ENCODE measurements at regions of chr13 and their contacts with region 1.

Region 1: GRCh38 chr13:33542283-33543088 is 256.9 kb upstream of the STARD13 start:
- DNase-seq: peak; percentile 97 to 100 (median 99)
- ATAC-seq: peak; percentile 79
- H3K4me3 ChIP-seq: peak overlapping the region; percentile 68 to 69
- H3K4me3 Mint-ChIP-seq: peak overlapping the region; percentile 91
- H3K27ac ChIP-seq: peak overlapping the region; percentile 95 to 96
- H3K27ac Mint-ChIP-seq: peak overlapping the region; percentile 99
- H3K4me1 ChIP-seq: peaks cover 28% of the 10 kb centered on the region
- H3K4me1 Mint-ChIP-seq: peaks cover 48% of the 10 kb centered on the region
- H3K27me3 ChIP-seq: no peaks in the 10 kb centered on the region
- H3K27me3 Mint-ChIP-seq: no peaks in the 10 kb centered on the region
- CTCF ChIP-seq: peak; percentile 77

Region 2: DNA sequence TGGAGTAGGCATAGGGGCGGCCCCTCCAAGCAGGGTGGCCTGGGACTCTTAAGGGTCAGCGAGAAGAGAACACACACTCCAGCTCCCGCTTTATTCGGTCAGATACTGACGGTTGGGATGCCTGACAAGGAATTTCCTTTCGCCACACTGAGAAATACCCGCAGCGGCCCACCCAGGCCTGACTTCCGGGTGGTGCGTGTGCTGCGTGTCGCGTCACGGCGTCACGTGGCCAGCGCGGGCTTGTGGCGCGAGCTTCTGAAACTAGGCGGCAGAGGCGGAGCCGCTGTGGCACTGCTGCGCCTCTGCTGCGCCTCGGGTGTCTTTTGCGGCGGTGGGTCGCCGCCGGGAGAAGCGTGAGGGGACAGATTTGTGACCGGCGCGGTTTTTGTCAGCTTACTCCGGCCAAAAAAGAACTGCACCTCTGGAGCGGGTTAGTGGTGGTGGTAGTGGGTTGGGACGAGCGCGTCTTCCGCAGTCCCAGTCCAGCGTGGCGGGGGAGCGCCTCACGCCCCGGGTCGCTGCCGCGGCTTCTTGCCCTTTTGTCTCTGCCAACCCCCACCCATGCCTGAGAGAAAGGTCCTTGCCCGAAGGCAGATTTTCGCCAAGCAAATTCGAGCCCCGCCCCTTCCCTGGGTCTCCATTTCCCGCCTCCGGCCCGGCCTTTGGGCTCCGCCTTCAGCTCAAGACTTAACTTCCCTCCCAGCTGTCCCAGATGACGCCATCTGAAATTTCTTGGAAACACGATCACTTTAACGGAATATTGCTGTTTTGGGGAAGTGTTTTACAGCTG is 1227.1 kb before region 1 on chr13 and contains the starts of genes BRCA2 and ZAR1L:
- CTCF ChIA-PET with region 1: no interaction called
- POLR2A ChIA-PET with region 1: interaction called, 4 read pairs
- intact Hi-C with region 1: loop called (anchors 1 to 2 kb)
- DNase-seq: peak; percentile 73 to 95 (median 88)
- ATAC-seq: peak; percentile 90
- H3K4me3 ChIP-seq: peak within 1 kb of the TSS; percentile 80 to 81
- H3K4me3 Mint-ChIP-seq: peak within 1 kb of the TSS; percentile 93
- H3K27ac ChIP-seq: peak within 1 kb of the TSS; percentile 99
- H3K27ac Mint-ChIP-seq: peak within 1 kb of the TSS; percentile 100
- H3K4me1 ChIP-seq: peaks cover 4% of the 10 kb centered on the region
- H3K4me1 Mint-ChIP-seq: peaks cover 14% of the 10 kb centered on the region
- H3K27me3 ChIP-seq: no peaks in the 10 kb centered on the region
- H3K27me3 Mint-ChIP-seq: no peaks in the 10 kb centered on the region
- CTCF ChIP-seq: no peak
- total RNA-seq, gene BRCA2: 2.6 to 3.6 TPM
- total RNA-seq, gene ZAR1L: not detected

Region 3: GRCh38 chr13:32443111-32443510 is 1099.4 kb before region 1 on chr13:
- CTCF ChIA-PET with region 1: no interaction called
- POLR2A ChIA-PET with region 1: no interaction called
- intact Hi-C with region 1: loop called in 1 of 2 experiments (anchors 5 kb)
- DNase-seq: peak in 6 of 9 experiments; percentile 14 to 77 (median 47)
- ATAC-seq: peak; percentile 75
- H3K4me3 ChIP-seq: no peak overlapping the region
- H3K4me3 Mint-ChIP-seq: no peak overlapping the region
- H3K27ac ChIP-seq: no peak overlapping the region
- H3K27ac Mint-ChIP-seq: no peak overlapping the region
- H3K4me1 ChIP-seq: no peaks in the 10 kb centered on the region
- H3K4me1 Mint-ChIP-seq: peaks cover 3% of the 10 kb centered on the region
- H3K27me3 ChIP-seq: no peaks in the 10 kb centered on the region
- H3K27me3 Mint-ChIP-seq: no peaks in the 10 kb centered on the region
- CTCF ChIP-seq: peak; percentile 65

Region 4: GRCh38 chr13:32639502-32640105 is 902.9 kb before region 1 on chr13:
- CTCF ChIA-PET with region 1: no interaction called
- POLR2A ChIA-PET with region 1: no interaction called
- intact Hi-C with region 1: loop called (anchors 5 kb)
- DNase-seq: peak; percentile 10 to 81 (median 56)
- ATAC-seq: peak; percentile 92
- H3K4me3 ChIP-seq: no peak overlapping the region
- H3K4me3 Mint-ChIP-seq: no peak overlapping the region
- H3K27ac ChIP-seq: no peak overlapping the region
- H3K27ac Mint-ChIP-seq: no peak overlapping the region
- H3K4me1 ChIP-seq: no peaks in the 10 kb centered on the region
- H3K4me1 Mint-ChIP-seq: peaks cover 32% of the 10 kb centered on the region
- H3K27me3 ChIP-seq: no peaks in the 10 kb centered on the region
- H3K27me3 Mint-ChIP-seq: no peaks in the 10 kb centered on the region
- CTCF ChIP-seq: peak; percentile 73

Region 5: GRCh38 chr13:33228648-33229445 is 313.6 kb before region 1 on chr13:
- CTCF ChIA-PET with region 1: interaction called, 3 read pairs
- POLR2A ChIA-PET with region 1: no interaction called
- intact Hi-C with region 1: loop called (anchors 1 kb)
- DNase-seq: peak in 2 of 9 experiments; percentile 52 to 61
- ATAC-seq: peak; percentile 72
- H3K4me3 ChIP-seq: no peak overlapping the region
- H3K4me3 Mint-ChIP-seq: no peak overlapping the region
- H3K27ac ChIP-seq: no peak overlapping the region
- H3K27ac Mint-ChIP-seq: no peak overlapping the region
- H3K4me1 ChIP-seq: no peaks in the 10 kb centered on the region
- H3K4me1 Mint-ChIP-seq: peaks cover 3% of the 10 kb centered on the region
- H3K27me3 ChIP-seq: no peaks in the 10 kb centered on the region
- H3K27me3 Mint-ChIP-seq: peaks cover 7% of the 10 kb centered on the region
- CTCF ChIP-seq: peak; percentile 94

Region 6: GRCh38 chr13:33855371-33855895 is 312.9 kb after region 1 on chr13:
- CTCF ChIA-PET with region 1: no interaction called
- POLR2A ChIA-PET with region 1: no interaction called
- intact Hi-C with region 1: no loop called
- DNase-seq: no peak
- ATAC-seq: no peak
- H3K4me3 ChIP-seq: no peak overlapping the region
- H3K4me3 Mint-ChIP-seq: no peak overlapping the region
- H3K27ac ChIP-seq: no peak overlapping the region
- H3K27ac Mint-ChIP-seq: no peak overlapping the region
- H3K4me1 ChIP-seq: no peaks in the 10 kb centered on the region
- H3K4me1 Mint-ChIP-seq: no peaks in the 10 kb centered on the region
- H3K27me3 ChIP-seq: no peaks in the 10 kb centered on the region
- H3K27me3 Mint-ChIP-seq: no peaks in the 10 kb centered on the region
- CTCF ChIP-seq: no peak

Region 7: GRCh38 chr13:33884531-33885220 is 342.2 kb after region 1 on chr13:
- CTCF ChIA-PET with region 1: no interaction called
- POLR2A ChIA-PET with region 1: no interaction called
- intact Hi-C with region 1: no loop called
- DNase-seq: no peak
- ATAC-seq: no peak
- H3K4me3 ChIP-seq: no peak overlapping the region
- H3K4me3 Mint-ChIP-seq: no peak overlapping the region
- H3K27ac ChIP-seq: no peak overlapping the region
- H3K27ac Mint-ChIP-seq: no peak overlapping the region
- H3K4me1 ChIP-seq: no peaks in the 10 kb centered on the region
- H3K4me1 Mint-ChIP-seq: no peaks in the 10 kb centered on the region
- H3K27me3 ChIP-seq: no peaks in the 10 kb centered on the region
- H3K27me3 Mint-ChIP-seq: no peaks in the 10 kb centered on the region
- CTCF ChIP-seq: no peak

Region 8: GRCh38 chr13:34941835-34942731 is 1399.6 kb after region 1 on chr13 and contains the start of gene NBEA:
- CTCF ChIA-PET with region 1: no interaction called
- POLR2A ChIA-PET with region 1: no interaction called
- intact Hi-C with region 1: loop called (anchors 5 to 10 kb)
- DNase-seq: peak; percentile 48 to 89 (median 77)
- ATAC-seq: peak; percentile 74
- H3K4me3 ChIP-seq: peak within 1 kb of the TSS; percentile 49 to 61
- H3K4me3 Mint-ChIP-seq: peak within 1 kb of the TSS; percentile 89
- H3K27ac ChIP-seq: no peak within 1 kb of the TSS
- H3K27ac Mint-ChIP-seq: peak within 1 kb of the TSS; percentile 73
- H3K4me1 ChIP-seq: peaks cover 13% of the 10 kb centered on the region
- H3K4me1 Mint-ChIP-seq: peaks cover 23% of the 10 kb centered on the region
- H3K27me3 ChIP-seq: peaks cover 0 to 4% of the 10 kb centered on the region in 2 experiments
- H3K27me3 Mint-ChIP-seq: peaks cover 41% of the 10 kb centered on the region
- CTCF ChIP-seq: no peak
- total RNA-seq, gene NBEA: 2.8 to 4.2 TPM

Measured in CD8-positive, alpha-beta T cell (primary cell).